ENCODE measurements at regions of chr3 and their contacts with region 1.

Region 1: GRCh38 chr3:71305231-71306206 is 278.0 kb downstream of the FOXP1 start:
- DNase-seq: peak in 8 of 9 donors; percentile 23 to 46 (median 30)
- ATAC-seq: peak; percentile 51
- H3K4me3 ChIP-seq: peak overlapping the region; percentile 73
- H3K4me3 Mint-ChIP-seq: peak overlapping the region; percentile 84 to 98 (median 95)
- H3K27ac ChIP-seq: peak overlapping the region; percentile 90
- H3K27ac Mint-ChIP-seq: peak overlapping the region in 8 of 9 donors; percentile 68 to 99 (median 98)
- H3K4me1 ChIP-seq: peaks cover 12 to 63% of the 10 kb centered on the region in 2 donors
- H3K4me1 Mint-ChIP-seq: peaks cover 46 to 90% (median 74%) of the 10 kb centered on the region in 7 donors
- H3K27me3 ChIP-seq: no peaks in the 10 kb centered on the region
- H3K27me3 Mint-ChIP-seq: peaks cover 0 to 67% (median 0%) of the 10 kb centered on the region in 5 donors

Region 2: GRCh38 chr3:70716832-70717231 is 588.7 kb before region 1 on chr3:
- CTCF ChIA-PET with region 1: interaction called, 3 read pairs
- POLR2A ChIA-PET with region 1: no interaction called
- intact Hi-C with region 1: loop called in 1 of 2 experiments (anchors 5 kb)
- DNase-seq: peak in 4 of 9 donors; percentile 10 to 36 (median 28)
- ATAC-seq: no peak
- H3K4me3 ChIP-seq: no peak overlapping the region
- H3K4me3 Mint-ChIP-seq: no peak overlapping the region
- H3K27ac ChIP-seq: no peak overlapping the region
- H3K27ac Mint-ChIP-seq: no peak overlapping the region
- H3K4me1 ChIP-seq: no peaks in the 10 kb centered on the region
- H3K4me1 Mint-ChIP-seq: peaks cover 0 to 4% (median 3%) of the 10 kb centered on the region in 7 donors
- H3K27me3 ChIP-seq: no peaks in the 10 kb centered on the region
- H3K27me3 Mint-ChIP-seq: peaks cover 10 to 16% (median 13%) of the 10 kb centered on the region in 5 donors

Region 3: DNA sequence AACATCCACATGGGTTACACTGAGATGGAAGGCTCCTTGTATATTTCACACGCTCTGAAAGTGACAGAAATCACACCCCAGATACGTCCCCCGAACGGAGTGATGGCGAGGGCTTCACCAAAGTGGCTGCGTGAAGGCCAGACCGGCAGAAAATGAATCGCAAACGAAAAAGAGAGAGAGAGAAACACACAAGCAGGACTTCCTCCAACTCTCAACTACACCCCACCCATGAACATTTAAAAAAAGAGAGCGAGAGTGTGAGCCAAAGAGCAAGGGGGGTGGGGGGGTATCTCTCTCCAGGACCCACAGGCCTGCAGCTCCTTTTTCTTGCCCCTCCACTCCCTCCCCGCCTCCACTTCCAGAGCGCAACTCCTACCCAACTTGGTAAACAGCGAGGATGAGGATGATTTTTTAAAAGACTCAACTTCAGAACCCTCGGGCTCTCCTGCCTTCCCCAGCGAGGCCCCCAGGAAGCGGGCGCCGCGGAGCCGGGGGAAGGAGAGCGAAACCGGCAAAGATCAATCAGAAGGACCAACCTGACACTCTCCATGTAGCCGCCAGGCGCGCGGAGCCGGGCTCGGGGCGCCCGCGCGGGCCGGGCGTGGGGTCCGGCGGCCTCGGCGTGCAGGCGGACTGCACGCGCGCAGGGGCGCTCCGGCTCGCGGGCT is 241.1 kb before region 1 on chr3:
- CTCF ChIA-PET with region 1: interaction called, 3 read pairs
- POLR2A ChIA-PET with region 1: interaction called, 3 read pairs
- intact Hi-C with region 1: loop called (anchors 2 to 5 kb)
- DNase-seq: peak in 8 of 9 donors; percentile 35 to 86 (median 84)
- ATAC-seq: peak; percentile 64
- H3K4me3 ChIP-seq: peak overlapping the region; percentile 74
- H3K4me3 Mint-ChIP-seq: no peak overlapping the region
- H3K27ac ChIP-seq: peak overlapping the region; percentile 82
- H3K27ac Mint-ChIP-seq: no peak overlapping the region
- H3K4me1 ChIP-seq: peaks cover 55 to 64% of the 10 kb centered on the region in 2 donors
- H3K4me1 Mint-ChIP-seq: peaks cover 47 to 69% (median 67%) of the 10 kb centered on the region in 7 donors
- H3K27me3 ChIP-seq: no peaks in the 10 kb centered on the region
- H3K27me3 Mint-ChIP-seq: no peaks in the 10 kb centered on the region

Region 4: GRCh38 chr3:71226565-71227269 is 78.8 kb before region 1 on chr3:
- CTCF ChIA-PET with region 1: interaction called, 3 read pairs
- POLR2A ChIA-PET with region 1: no interaction called
- intact Hi-C with region 1: loop called in 1 of 2 experiments (anchors 1 kb)
- DNase-seq: peak; percentile 34 to 89 (median 65)
- ATAC-seq: peak; percentile 86
- H3K4me3 ChIP-seq: peak overlapping the region; percentile 48
- H3K4me3 Mint-ChIP-seq: peak overlapping the region; percentile 51 to 85 (median 79)
- H3K27ac ChIP-seq: peak overlapping the region; percentile 59
- H3K27ac Mint-ChIP-seq: peak overlapping the region; percentile 85 to 97 (median 90)
- H3K4me1 ChIP-seq: peaks cover 21 to 64% of the 10 kb centered on the region in 2 donors
- H3K4me1 Mint-ChIP-seq: peaks cover 30 to 91% (median 88%) of the 10 kb centered on the region in 7 donors
- H3K27me3 ChIP-seq: no peaks in the 10 kb centered on the region
- H3K27me3 Mint-ChIP-seq: peaks cover 0 to 52% (median 0%) of the 10 kb centered on the region in 5 donors

Region 5: GRCh38 chr3:71369701-71370391 is 64.3 kb after region 1 on chr3:
- CTCF ChIA-PET with region 1: interaction called, 6 read pairs
- POLR2A ChIA-PET with region 1: interaction called, 3 read pairs
- intact Hi-C with region 1: loop called in 1 of 2 experiments (anchors 1 kb)
- DNase-seq: no peak
- ATAC-seq: no peak
- H3K4me3 ChIP-seq: no peak overlapping the region
- H3K4me3 Mint-ChIP-seq: peak overlapping the region in 2 of 10 donors; percentile 12 to 73
- H3K27ac ChIP-seq: peak overlapping the region; percentile 88
- H3K27ac Mint-ChIP-seq: peak overlapping the region in 8 of 9 donors; percentile 88 to 100 (median 96)
- H3K4me1 ChIP-seq: peaks cover 19 to 78% of the 10 kb centered on the region in 2 donors
- H3K4me1 Mint-ChIP-seq: peaks cover 10 to 94% (median 89%) of the 10 kb centered on the region in 7 donors
- H3K27me3 ChIP-seq: no peaks in the 10 kb centered on the region
- H3K27me3 Mint-ChIP-seq: peaks cover 0 to 39% (median 0%) of the 10 kb centered on the region in 5 donors

Region 6: GRCh38 chr3:71495708-71496472 is 190.4 kb after region 1 on chr3:
- CTCF ChIA-PET with region 1: interaction called, 4 read pairs
- POLR2A ChIA-PET with region 1: interaction called, 4 read pairs
- intact Hi-C with region 1: loop called in 1 of 2 experiments (anchors 5 kb)
- DNase-seq: peak in 2 of 9 donors; percentile 24 to 34
- ATAC-seq: no peak
- H3K4me3 ChIP-seq: peak overlapping the region; percentile 33
- H3K4me3 Mint-ChIP-seq: peak overlapping the region; percentile 52 to 98 (median 80)
- H3K27ac ChIP-seq: peak overlapping the region; percentile 89
- H3K27ac Mint-ChIP-seq: peak overlapping the region; percentile 77 to 100 (median 98)
- H3K4me1 ChIP-seq: peaks cover 43 to 71% of the 10 kb centered on the region in 2 donors
- H3K4me1 Mint-ChIP-seq: peaks cover 54 to 90% (median 85%) of the 10 kb centered on the region in 7 donors
- H3K27me3 ChIP-seq: no peaks in the 10 kb centered on the region
- H3K27me3 Mint-ChIP-seq: no peaks in the 10 kb centered on the region

Region 7: GRCh38 chr3:71763426-71763825 is 457.9 kb after region 1 on chr3:
- CTCF ChIA-PET with region 1: no interaction called
- POLR2A ChIA-PET with region 1: no interaction called
- intact Hi-C with region 1: no loop called
- DNase-seq: no peak
- ATAC-seq: no peak
- H3K4me3 ChIP-seq: no peak overlapping the region
- H3K4me3 Mint-ChIP-seq: no peak overlapping the region
- H3K27ac ChIP-seq: no peak overlapping the region
- H3K27ac Mint-ChIP-seq: no peak overlapping the region
- H3K4me1 ChIP-seq: no peaks in the 10 kb centered on the region
- H3K4me1 Mint-ChIP-seq: no peaks in the 10 kb centered on the region
- H3K27me3 ChIP-seq: no peaks in the 10 kb centered on the region
- H3K27me3 Mint-ChIP-seq: peaks cover 0 to 46% (median 11%) of the 10 kb centered on the region in 5 donors